PC-9 (cell line): ENCODE measurements at regions of chr3 and their contacts with region 1.

Region 1: GRCh38 chr3:139329345-139329850 is 14.4 kb upstream of the MRPS22 start:
- DNase-seq: peak; percentile 72 to 94
- H3K4me3 ChIP-seq: no peak overlapping the region
- H3K27ac ChIP-seq: no peak overlapping the region
- H3K4me1 ChIP-seq: 0 out of 2 replicates have a peak, but pooled peaks cover 3% of the 10 kb centered on the region
- H3K27me3 ChIP-seq: peaks cover 10% of the 10 kb centered on the region
- CTCF ChIP-seq: peak; percentile 97

Region 2: GRCh38 chr3:138694287-138695007 is 635.0 kb before region 1 on chr3:
- CTCF ChIA-PET with region 1: no interaction called
- POLR2A ChIA-PET with region 1: no interaction called
- intact Hi-C with region 1: loop called (anchors 2 kb)
- DNase-seq: peak; percentile 52 to 94
- H3K4me3 ChIP-seq: no peak overlapping the region
- H3K27ac ChIP-seq: peak overlapping the region; percentile 71
- H3K4me1 ChIP-seq: peaks cover 26% of the 10 kb centered on the region
- H3K27me3 ChIP-seq: no peaks in the 10 kb centered on the region
- CTCF ChIP-seq: no peak

Region 3: GRCh38 chr3:138935848-138936740 is 393.3 kb before region 1 on chr3:
- CTCF ChIA-PET with region 1: no interaction called
- POLR2A ChIA-PET with region 1: no interaction called
- intact Hi-C with region 1: loop called (anchors 1 kb)
- DNase-seq: peak in 1 of 2 experiments; percentile 81
- H3K4me3 ChIP-seq: peak overlapping the region; percentile 76
- H3K27ac ChIP-seq: no peak overlapping the region
- H3K4me1 ChIP-seq: 0 out of 2 replicates have a peak, but pooled peaks cover 6% of the 10 kb centered on the region
- H3K27me3 ChIP-seq: no peaks in the 10 kb centered on the region
- CTCF ChIP-seq: peak; percentile 88

Region 4: GRCh38 chr3:139111392-139112229 is 217.8 kb before region 1 on chr3:
- CTCF ChIA-PET with region 1: interaction called, 23 read pairs
- POLR2A ChIA-PET with region 1: no interaction called
- intact Hi-C with region 1: loop called (anchors 2 kb)
- DNase-seq: peak in 1 of 2 experiments; percentile 67
- H3K4me3 ChIP-seq: no peak overlapping the region
- H3K27ac ChIP-seq: no peak overlapping the region
- H3K4me1 ChIP-seq: no peaks in the 10 kb centered on the region
- H3K27me3 ChIP-seq: 0 out of 2 replicates have a peak, but pooled peaks cover 6% of the 10 kb centered on the region
- CTCF ChIP-seq: peak; percentile 77

Region 5: GRCh38 chr3:139288266-139288821 is 41.1 kb before region 1 on chr3:
- CTCF ChIA-PET with region 1: no interaction called
- POLR2A ChIA-PET with region 1: no interaction called
- intact Hi-C with region 1: loop called (anchors 1 kb)
- DNase-seq: no peak
- H3K4me3 ChIP-seq: no peak overlapping the region
- H3K27ac ChIP-seq: no peak overlapping the region
- H3K4me1 ChIP-seq: no peaks in the 10 kb centered on the region
- H3K27me3 ChIP-seq: no peaks in the 10 kb centered on the region
- CTCF ChIP-seq: peak; percentile 34; the same call in 1 of the 2 replicates

Region 6: DNA sequence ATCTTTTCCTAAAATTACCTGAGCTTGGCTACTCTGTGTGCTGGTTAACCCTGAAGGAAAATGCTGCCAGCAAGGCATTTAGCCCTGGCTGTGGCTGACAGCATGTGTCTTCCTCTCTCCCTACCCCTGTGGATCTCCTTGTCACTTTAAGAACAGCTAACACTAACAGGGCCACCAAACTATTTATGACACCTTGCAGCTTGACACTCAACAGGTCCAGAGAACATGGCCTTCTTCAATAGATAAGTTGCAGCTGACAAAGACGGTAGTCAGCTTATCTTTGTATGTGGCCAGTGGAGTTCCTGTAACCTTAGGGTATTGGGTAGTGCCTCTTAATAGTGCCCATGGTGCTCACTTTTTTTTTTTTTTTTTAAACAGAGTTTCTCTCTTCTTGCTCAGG is 92.1 kb after region 1 on chr3:
- CTCF ChIA-PET with region 1: no interaction called
- POLR2A ChIA-PET with region 1: no interaction called
- intact Hi-C with region 1: no loop called
- DNase-seq: no peak
- H3K4me3 ChIP-seq: no peak overlapping the region
- H3K27ac ChIP-seq: no peak overlapping the region
- H3K4me1 ChIP-seq: no peaks in the 10 kb centered on the region
- H3K27me3 ChIP-seq: no peaks in the 10 kb centered on the region
- CTCF ChIP-seq: no peak

Region 7: GRCh38 chr3:139574026-139574947 is 244.9 kb after region 1 on chr3:
- CTCF ChIA-PET with region 1: no interaction called
- POLR2A ChIA-PET with region 1: no interaction called
- intact Hi-C with region 1: no loop called
- DNase-seq: no peak
- H3K4me3 ChIP-seq: no peak overlapping the region
- H3K27ac ChIP-seq: no peak overlapping the region
- H3K4me1 ChIP-seq: no peaks in the 10 kb centered on the region
- H3K27me3 ChIP-seq: no peaks in the 10 kb centered on the region
- CTCF ChIP-seq: no peak